MCF 10A (cell line): ENCODE measurements at regions of chr11 and their contacts with region 1.

Region 1: DNA sequence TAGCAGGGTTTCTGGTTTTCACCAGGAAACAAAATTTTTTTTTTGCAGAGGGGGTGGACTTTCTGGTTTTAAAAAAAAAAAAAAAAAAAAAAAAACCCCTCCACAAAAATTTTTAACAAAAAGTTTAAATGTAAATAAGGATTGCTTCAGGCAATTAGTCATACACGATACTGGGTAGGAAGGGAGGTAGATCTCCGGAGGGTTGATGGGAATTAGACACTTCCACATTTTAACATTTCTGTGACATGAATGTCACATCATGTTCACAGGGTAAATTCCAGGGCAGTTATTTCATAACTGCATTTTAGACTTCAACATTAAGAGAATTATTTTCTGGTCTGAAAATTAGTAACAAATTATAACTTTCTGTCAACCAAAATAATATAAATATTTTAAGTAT is 15.9 kb downstream of the NUP98 start:
- DNase-seq: peak; percentile 54
- H3K4me3 Mint-ChIP-seq: no peak overlapping the region
- H3K27ac Mint-ChIP-seq: peak overlapping the region; percentile 54
- H3K4me1 Mint-ChIP-seq: peaks cover 5% of the 10 kb centered on the region
- H3K27me3 Mint-ChIP-seq: no peaks in the 10 kb centered on the region
- CTCF ChIP-seq: no peak

Region 2: GRCh38 chr11:3797329-3798095 is 16.1 kb after region 1 on chr11 and contains the start of gene NUP98:
- CTCF ChIA-PET with region 1: interaction called, 7 read pairs
- POLR2A ChIA-PET with region 1: interaction called, 51 read pairs
- intact Hi-C with region 1: no loop called
- DNase-seq: peak; percentile 100
- H3K4me3 Mint-ChIP-seq: peak within 1 kb of the TSS; percentile 86
- H3K27ac Mint-ChIP-seq: peak within 1 kb of the TSS; percentile 93
- H3K4me1 Mint-ChIP-seq: peaks cover 9% of the 10 kb centered on the region
- H3K27me3 Mint-ChIP-seq: no peaks in the 10 kb centered on the region
- CTCF ChIP-seq: no peak
- total RNA-seq, gene NUP98: 79.4 and 83.7 TPM in 2 replicates